ENCODE measurements at regions of chr1 and their contacts with region 1.

Region 1: DNA sequence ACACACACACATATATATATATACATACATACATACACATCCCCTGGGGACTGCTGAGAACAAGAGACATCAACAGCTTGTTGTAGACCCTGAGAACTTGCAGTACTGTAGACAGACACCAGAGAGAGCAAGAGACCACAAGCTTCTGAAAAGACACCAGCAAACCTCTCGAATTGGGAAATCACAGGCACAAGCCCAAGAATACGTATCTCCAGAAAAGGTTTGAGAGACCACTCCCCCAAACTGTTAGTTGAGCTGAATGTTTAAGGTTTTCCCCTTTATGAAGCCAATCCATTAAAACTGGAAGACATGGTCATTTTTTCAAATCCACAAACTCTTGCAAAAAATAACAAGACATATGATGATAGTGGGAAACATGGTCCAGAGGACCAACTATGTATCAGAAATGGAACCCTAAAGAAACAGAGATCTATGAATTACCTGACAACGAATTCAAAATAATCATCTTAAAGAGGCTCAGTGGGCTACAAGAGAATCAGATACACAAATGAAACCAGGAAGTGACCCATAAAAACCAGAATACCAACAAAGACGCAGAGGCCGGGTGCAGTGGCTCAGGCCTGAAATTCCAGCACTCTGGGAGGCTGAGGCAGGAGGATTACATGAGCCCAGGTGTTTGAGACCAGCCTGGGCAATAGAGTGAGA is 45.1 kb downstream of the SLC2A1 start:
- DNase-seq: peak in 1 of 3 donors; percentile 64
- ATAC-seq: peak; percentile 93 to 98 (median 95)
- H3K4me3 ChIP-seq: no peak overlapping the region
- H3K27ac ChIP-seq: no peak overlapping the region
- H3K4me1 ChIP-seq: no peaks in the 10 kb centered on the region
- H3K27me3 ChIP-seq: no peaks in the 10 kb centered on the region
- CTCF ChIP-seq: peak; percentile 66 to 98 (median 80)
- POLR2A ChIP-seq: no peak

Region 2: GRCh38 chr1:42777852-42778251 is 135.7 kb before region 1 on chr1:
- intact Hi-C with region 1: loop called in 1 of 2 experiments (anchors 5 kb)
- DNase-seq: no peak
- ATAC-seq: peak; percentile 67 to 76 (median 74)
- H3K4me3 ChIP-seq: no peak overlapping the region
- H3K27ac ChIP-seq: no peak overlapping the region
- H3K4me1 ChIP-seq: peaks cover 0 to 11% (median 0%) of the 10 kb centered on the region in 4 donors
- H3K27me3 ChIP-seq: no peaks in the 10 kb centered on the region
- CTCF ChIP-seq: peak; percentile 56 to 64 (median 61)
- POLR2A ChIP-seq: no peak

Region 3: DNA sequence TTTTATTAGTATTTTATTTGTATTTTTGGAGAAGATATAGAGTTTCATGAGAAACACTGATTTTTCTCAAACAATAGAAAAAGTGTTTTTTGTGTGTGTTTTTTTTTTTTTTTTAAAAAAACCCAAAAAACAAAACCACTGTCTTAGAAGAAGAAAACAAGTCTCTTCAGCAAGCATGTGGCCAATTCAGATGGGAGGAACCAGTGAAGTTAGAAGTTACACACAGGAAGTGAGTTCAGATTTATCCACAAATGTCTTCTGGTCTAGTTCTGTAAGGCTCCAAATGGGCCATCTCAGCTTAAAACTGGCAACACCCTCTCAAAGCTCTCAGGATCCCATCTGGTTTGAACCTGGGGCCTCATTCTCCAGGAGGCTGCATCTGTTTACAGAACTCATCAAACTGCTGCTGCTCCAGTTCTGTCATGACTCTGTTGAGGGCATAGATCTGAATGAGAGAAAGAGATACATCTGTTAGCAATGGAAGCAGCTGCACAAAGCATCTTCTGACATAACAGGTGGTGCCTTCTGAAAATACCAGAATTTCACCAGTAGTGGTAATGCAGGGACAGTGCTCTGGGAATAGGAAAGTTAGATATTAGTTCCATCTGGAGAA is 106.4 kb before region 1 on chr1:
- intact Hi-C with region 1: no loop called
- DNase-seq: no peak
- ATAC-seq: no peak
- H3K4me3 ChIP-seq: no peak overlapping the region
- H3K27ac ChIP-seq: no peak overlapping the region
- H3K4me1 ChIP-seq: no peaks in the 10 kb centered on the region
- H3K27me3 ChIP-seq: no peaks in the 10 kb centered on the region
- CTCF ChIP-seq: no peak
- POLR2A ChIP-seq: no peak

Region 4: GRCh38 chr1:43073490-43074230 is 160.1 kb after region 1 on chr1:
- intact Hi-C with region 1: loop called (anchors 5 kb)
- DNase-seq: peak; percentile 50 to 73 (median 70)
- ATAC-seq: peak; percentile 91 to 97 (median 95)
- H3K4me3 ChIP-seq: no peak overlapping the region
- H3K27ac ChIP-seq: no peak overlapping the region
- H3K4me1 ChIP-seq: no peaks in the 10 kb centered on the region
- H3K27me3 ChIP-seq: no peaks in the 10 kb centered on the region
- CTCF ChIP-seq: peak; percentile 74 to 92 (median 82)
- POLR2A ChIP-seq: no peak

Measured in right lobe of liver (tissue), 6 donors.